Activated CD4-positive, alpha-beta memory T cell treated with anti-CD3 and anti-CD28 coated beads, Interleukin-2, amount 10 ng/mL, durations not matched to agents 7 days and 5 days (primary cell): ENCODE measurements at regions of chr13 and their contacts with region 1.

Region 1: DNA sequence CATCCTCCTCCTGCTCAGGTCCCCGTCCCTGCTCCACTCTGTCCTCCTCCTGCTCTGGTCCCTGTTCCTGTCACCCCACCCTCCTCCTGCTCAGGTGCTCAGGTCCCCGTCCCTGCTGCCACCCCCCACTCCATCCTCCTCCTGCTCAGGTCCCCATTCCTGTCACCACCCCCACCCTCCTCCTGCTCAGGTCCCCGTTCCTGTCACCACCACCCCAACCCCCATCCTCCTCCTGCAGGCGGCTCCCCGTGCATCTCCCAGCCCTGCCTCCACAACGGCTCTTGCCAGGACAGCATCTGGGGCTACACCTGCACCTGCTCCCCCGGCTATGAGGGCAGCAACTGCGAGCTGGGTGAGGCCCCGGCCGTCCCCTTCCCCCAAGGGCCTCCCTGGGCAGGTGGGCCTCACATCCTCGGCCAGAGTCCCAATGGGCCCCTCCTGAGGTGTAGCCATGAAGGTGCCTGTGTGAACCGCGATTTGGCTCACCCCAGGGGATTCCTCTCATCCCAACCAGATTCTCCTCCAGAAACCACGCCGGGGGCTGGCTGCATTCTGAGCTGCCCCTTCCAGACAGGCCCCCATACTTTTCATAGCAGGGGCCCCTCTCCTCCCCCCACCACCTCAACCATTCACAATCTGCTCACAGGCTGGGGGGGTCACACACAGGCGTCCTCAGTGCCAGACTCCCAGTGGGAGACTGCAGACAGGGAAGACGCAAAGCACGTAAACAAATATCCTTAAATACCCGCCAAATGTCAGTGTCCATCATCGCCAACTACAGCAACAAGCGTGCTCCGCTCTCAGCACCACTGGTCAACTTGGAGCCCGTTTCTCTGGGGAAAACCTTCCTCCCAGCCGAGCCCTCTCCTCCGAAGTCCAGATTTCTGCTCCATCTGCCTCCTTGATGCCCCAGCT is 4.6 kb downstream of the PROZ start:
- DNase-seq: no peak
- H3K4me3 Mint-ChIP-seq: no peak overlapping the region
- H3K27ac Mint-ChIP-seq: peak overlapping the region; percentile 69
- H3K4me1 Mint-ChIP-seq: peaks cover 34% of the 10 kb centered on the region
- H3K27me3 Mint-ChIP-seq: peaks cover 1% of the 10 kb centered on the region

Region 2: GRCh38 chr13:112849500-112849899 is 313.5 kb before region 1 on chr13:
- CTCF ChIA-PET with region 1: no interaction called
- POLR2A ChIA-PET with region 1: no interaction called
- DNase-seq: no peak
- H3K4me3 Mint-ChIP-seq: no peak overlapping the region
- H3K27ac Mint-ChIP-seq: no peak overlapping the region
- H3K4me1 Mint-ChIP-seq: peaks cover 2% of the 10 kb centered on the region
- H3K27me3 Mint-ChIP-seq: no peaks in the 10 kb centered on the region

Region 3: DNA sequence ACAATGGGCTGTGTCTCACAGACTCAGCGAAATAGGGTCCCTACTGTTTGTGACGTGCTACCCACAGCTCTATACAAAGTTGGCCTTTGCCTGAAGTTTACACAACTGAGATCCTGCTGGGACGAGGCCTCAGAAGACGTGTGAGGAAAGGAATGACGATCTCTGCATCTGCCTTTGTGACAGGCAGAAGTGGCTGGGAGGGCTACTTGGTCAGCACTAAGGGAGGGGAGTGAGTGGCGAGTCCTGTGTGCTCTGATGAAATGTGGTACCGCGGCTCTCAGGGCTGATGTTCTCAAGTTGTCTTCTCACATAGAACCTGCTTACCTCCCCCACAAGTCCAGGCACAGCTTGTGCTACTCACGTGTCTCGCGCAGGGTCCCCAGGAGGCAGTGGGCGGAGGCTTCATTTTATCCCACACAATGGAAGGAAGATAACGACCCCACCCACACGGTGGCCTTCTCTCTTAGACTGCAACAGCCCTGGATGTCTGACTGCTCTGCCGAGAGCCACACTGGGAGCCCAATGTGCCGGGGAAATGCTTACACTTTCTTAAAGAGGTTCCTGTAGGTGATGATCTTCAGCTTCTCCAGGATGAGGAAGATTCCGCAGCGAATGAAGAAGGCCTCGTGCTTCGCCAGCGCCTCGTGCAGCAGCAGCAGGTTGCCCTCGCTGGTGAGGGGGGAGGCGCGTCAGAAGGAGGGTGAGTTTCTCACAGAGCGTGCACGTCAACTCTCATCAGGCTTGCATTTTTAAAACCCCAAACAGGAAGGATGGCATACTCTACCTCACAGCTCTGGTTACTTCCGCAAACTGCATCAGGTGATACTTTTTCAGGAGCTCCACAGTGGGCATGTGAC is 16.6 kb after region 1 on chr13:
- CTCF ChIA-PET with region 1: interaction called, 3 read pairs
- POLR2A ChIA-PET with region 1: interaction called, 31 read pairs
- DNase-seq: peak; percentile 40
- H3K4me3 Mint-ChIP-seq: peak overlapping the region; percentile 35
- H3K27ac Mint-ChIP-seq: peak overlapping the region; percentile 88
- H3K4me1 Mint-ChIP-seq: peaks cover 83% of the 10 kb centered on the region
- H3K27me3 Mint-ChIP-seq: no peaks in the 10 kb centered on the region